ENCODE measurements at regions of chr1 and their contacts with region 1.

Region 1: GRCh38 chr1:21324368-21325141 is 34.3 kb upstream of the ECE1 start:
- DNase-seq: peak; percentile 78 to 94 (median 91)
- H3K4me3 ChIP-seq: peak overlapping the region in 4 of 7 experiments; percentile 12 to 61 (median 40)
- H3K27ac ChIP-seq: peak overlapping the region; percentile 61 to 78
- H3K4me1 ChIP-seq: peaks cover 7 to 54% (median 47%) of the 10 kb centered on the region in 4 experiments
- H3K27me3 ChIP-seq: no peaks in the 10 kb centered on the region

Region 2: GRCh38 chr1:21232044-21232443 is 92.5 kb before region 1 on chr1:
- CTCF ChIA-PET with region 1: interaction called, 12 read pairs
- POLR2A ChIA-PET with region 1: no interaction called
- DNase-seq: peak; percentile 36 to 60 (median 50)
- H3K4me3 ChIP-seq: no peak overlapping the region
- H3K27ac ChIP-seq: no peak overlapping the region
- H3K4me1 ChIP-seq: peaks cover 0 to 6% (median 3%) of the 10 kb centered on the region in 4 experiments
- H3K27me3 ChIP-seq: no peaks in the 10 kb centered on the region

Region 3: GRCh38 chr1:21302747-21303715 is 21.5 kb before region 1 on chr1:
- CTCF ChIA-PET with region 1: interaction called, 17 read pairs
- POLR2A ChIA-PET with region 1: no interaction called
- DNase-seq: peak in 2 of 3 donors; percentile 33 to 40
- H3K4me3 ChIP-seq: no peak overlapping the region
- H3K27ac ChIP-seq: no peak overlapping the region
- H3K4me1 ChIP-seq: peaks cover 3 to 10% (median 8%) of the 10 kb centered on the region in 4 experiments
- H3K27me3 ChIP-seq: no peaks in the 10 kb centered on the region

Region 4: DNA sequence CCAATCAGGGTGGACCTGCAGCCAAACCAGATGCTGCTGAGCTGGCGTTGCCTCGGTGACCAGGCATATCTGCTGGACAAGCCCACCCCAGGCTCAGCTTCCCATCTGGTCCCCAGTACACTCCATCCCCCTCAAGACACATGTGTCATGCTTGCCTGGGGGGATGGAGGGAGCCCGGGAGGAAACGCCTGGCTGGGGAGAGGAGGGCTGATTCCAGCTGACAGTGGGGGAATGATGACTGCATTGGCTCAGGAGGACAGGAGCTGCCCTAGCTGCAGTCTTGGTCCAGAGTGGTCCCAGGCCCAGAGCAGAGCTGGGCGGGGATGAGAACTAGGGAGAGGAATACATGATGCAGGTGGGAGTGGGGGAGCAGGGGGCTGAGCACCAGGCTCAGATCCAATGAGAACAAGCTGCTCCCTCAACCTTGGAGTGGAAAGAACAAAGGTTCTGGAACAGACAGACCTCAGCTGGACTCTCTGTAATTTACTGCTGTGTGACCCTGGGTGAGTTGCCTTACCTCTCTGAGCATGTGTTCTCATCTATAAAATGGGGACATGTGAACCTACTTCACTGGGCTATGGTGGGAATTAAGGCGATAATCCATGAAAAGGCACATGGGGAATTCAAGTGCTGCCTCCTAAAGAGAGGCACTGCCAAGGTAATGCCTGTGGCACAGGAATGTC is 11.2 kb before region 1 on chr1:
- CTCF ChIA-PET with region 1: interaction called, 10 read pairs
- POLR2A ChIA-PET with region 1: interaction called, 3 read pairs
- DNase-seq: peak in 1 of 3 donors; percentile 26
- H3K4me3 ChIP-seq: no peak overlapping the region
- H3K27ac ChIP-seq: no peak overlapping the region
- H3K4me1 ChIP-seq: no peaks in the 10 kb centered on the region
- H3K27me3 ChIP-seq: no peaks in the 10 kb centered on the region

Region 5: DNA sequence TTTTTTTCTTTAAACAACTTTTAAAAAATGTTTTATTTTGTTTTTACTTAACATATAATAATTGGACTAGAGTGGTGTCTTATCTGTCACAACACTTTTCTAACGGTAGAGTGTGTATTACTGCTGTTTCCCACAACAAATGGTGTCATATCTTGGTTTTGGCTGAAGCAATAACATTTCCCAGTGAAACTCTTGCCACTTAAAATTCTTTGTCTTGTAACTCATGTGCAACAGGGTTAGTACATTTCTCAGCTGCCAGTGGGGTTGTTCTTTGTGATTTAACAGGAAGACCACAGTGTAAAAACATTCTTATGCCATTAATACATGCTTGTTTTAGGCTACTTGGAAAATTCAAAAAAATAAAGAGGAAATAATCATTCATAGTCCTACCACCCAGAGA is 228.2 kb after region 1 on chr1:
- CTCF ChIA-PET with region 1: no interaction called
- POLR2A ChIA-PET with region 1: no interaction called
- DNase-seq: peak in 2 of 3 donors; percentile 55 to 62
- H3K4me3 ChIP-seq: peak overlapping the region in 1 of 7 experiments; percentile 16
- H3K27ac ChIP-seq: no peak overlapping the region
- H3K4me1 ChIP-seq: peaks cover 12 to 29% (median 17%) of the 10 kb centered on the region in 4 experiments
- H3K27me3 ChIP-seq: peaks cover 0 to 57% (median 16%) of the 10 kb centered on the region in 5 experiments

Measured in common myeloid progenitor, CD34-positive (primary cell).